ENCODE measurements at regions of chr22 and their contacts with region 1.

Region 1: DNA sequence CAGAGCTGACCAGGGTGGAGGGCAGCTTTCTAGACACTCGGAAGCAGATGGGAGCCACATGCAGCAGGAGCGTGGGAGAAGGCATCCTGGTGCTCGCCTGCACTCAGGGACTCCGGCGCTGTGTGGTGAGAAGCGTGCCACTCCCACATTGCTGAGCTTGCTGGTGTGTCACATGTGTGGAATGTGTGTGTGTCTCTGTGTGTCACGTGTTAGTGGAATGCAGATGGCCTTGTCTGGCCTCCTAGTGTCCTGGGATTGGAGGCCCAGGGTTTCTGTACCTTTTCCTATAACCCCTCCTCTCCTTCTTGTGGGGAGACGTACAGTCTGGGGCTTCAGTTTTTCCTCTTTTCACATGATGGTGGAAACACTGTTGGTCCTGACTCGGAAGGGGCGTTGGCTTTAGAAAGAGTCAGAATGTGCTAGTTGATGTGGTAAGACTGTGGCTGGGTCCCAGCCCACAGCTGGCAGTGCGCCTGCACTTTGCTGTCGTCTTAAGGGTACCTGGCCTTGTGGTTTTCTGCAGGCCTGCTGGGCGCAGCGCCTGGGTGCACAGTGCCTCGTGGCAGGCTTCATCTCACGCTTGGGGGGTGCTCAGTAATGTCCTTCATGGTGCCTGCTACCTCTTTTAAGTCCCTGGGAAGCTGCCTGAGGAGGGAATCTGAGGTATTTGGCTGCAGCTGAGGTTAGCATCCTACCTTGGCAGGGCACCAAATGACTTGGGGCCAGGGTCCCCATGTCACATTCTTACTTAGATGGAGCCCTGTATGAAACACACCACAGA is 61.8 kb downstream of the MED15 start:
- DNase-seq: peak; percentile 33
- ATAC-seq: peak; percentile 84
- H3K4me3 ChIP-seq: no peak overlapping the region
- H3K27ac ChIP-seq: no peak overlapping the region
- H3K4me1 ChIP-seq: peaks cover 14% of the 10 kb centered on the region
- H3K27me3 ChIP-seq: no peaks in the 10 kb centered on the region
- CTCF ChIP-seq: no peak
- EP300 ChIP-seq: no peak
- POLR2A ChIP-seq: 0 out of 2 replicates have a peak, but pooled peaks have one; percentile 2
- RAD21 ChIP-seq: no peak

Region 2: GRCh38 chr22:20549232-20549841 is 19.8 kb before region 1 on chr22:
- CTCF ChIA-PET with region 1: interaction called, 29 read pairs
- POLR2A ChIA-PET with region 1: no interaction called
- RAD21 ChIA-PET with region 1: no interaction called
- SMC1A ChIA-PET with region 1: no interaction called
- in situ Hi-C with region 1: no loop called
- intact Hi-C with region 1: no loop called
- DNase-seq: no peak
- ATAC-seq: peak; percentile 48
- H3K4me3 ChIP-seq: no peak overlapping the region
- H3K27ac ChIP-seq: no peak overlapping the region
- H3K4me1 ChIP-seq: peaks cover 24% of the 10 kb centered on the region
- H3K27me3 ChIP-seq: no peaks in the 10 kb centered on the region
- CTCF ChIP-seq: no peak
- EP300 ChIP-seq: no peak
- POLR2A ChIP-seq: no peak
- RAD21 ChIP-seq: no peak

Region 3: GRCh38 chr22:20741634-20742581 is 172.7 kb after region 1 on chr22:
- CTCF ChIA-PET with region 1: interaction called, 16 read pairs
- POLR2A ChIA-PET with region 1: no interaction called
- RAD21 ChIA-PET with region 1: no interaction called
- SMC1A ChIA-PET with region 1: no interaction called
- in situ Hi-C with region 1: no loop called
- intact Hi-C with region 1: no loop called
- DNase-seq: no peak
- ATAC-seq: peak; percentile 61
- H3K4me3 ChIP-seq: no peak overlapping the region
- H3K27ac ChIP-seq: no peak overlapping the region
- H3K4me1 ChIP-seq: peaks cover 8% of the 10 kb centered on the region
- H3K27me3 ChIP-seq: no peaks in the 10 kb centered on the region
- CTCF ChIP-seq: peak; percentile 59 to 81 (median 66)
- EP300 ChIP-seq: no peak
- POLR2A ChIP-seq: no peak
- RAD21 ChIP-seq: peak; percentile 62